MCF 10A (cell line): ENCODE measurements at regions of chr1 and their contacts with region 1.

Region 1: GRCh38 chr1:92909321-92909720 is 51.9 kb downstream of the DIPK1A start:
- DNase-seq: peak; percentile 94
- H3K4me3 Mint-ChIP-seq: no peak overlapping the region
- H3K27ac Mint-ChIP-seq: peak overlapping the region; percentile 56
- H3K4me1 Mint-ChIP-seq: peaks cover 26% of the 10 kb centered on the region
- H3K27me3 Mint-ChIP-seq: no peaks in the 10 kb centered on the region
- CTCF ChIP-seq: no peak

Region 2: GRCh38 chr1:92536980-92537884 is 372.1 kb before region 1 on chr1:
- CTCF ChIA-PET with region 1: no interaction called
- POLR2A ChIA-PET with region 1: no interaction called
- intact Hi-C with region 1: no loop called
- DNase-seq: peak; percentile 14
- H3K4me3 Mint-ChIP-seq: no peak overlapping the region
- H3K27ac Mint-ChIP-seq: no peak overlapping the region
- H3K4me1 Mint-ChIP-seq: no peaks in the 10 kb centered on the region
- H3K27me3 Mint-ChIP-seq: no peaks in the 10 kb centered on the region
- CTCF ChIP-seq: no peak

Region 3: DNA sequence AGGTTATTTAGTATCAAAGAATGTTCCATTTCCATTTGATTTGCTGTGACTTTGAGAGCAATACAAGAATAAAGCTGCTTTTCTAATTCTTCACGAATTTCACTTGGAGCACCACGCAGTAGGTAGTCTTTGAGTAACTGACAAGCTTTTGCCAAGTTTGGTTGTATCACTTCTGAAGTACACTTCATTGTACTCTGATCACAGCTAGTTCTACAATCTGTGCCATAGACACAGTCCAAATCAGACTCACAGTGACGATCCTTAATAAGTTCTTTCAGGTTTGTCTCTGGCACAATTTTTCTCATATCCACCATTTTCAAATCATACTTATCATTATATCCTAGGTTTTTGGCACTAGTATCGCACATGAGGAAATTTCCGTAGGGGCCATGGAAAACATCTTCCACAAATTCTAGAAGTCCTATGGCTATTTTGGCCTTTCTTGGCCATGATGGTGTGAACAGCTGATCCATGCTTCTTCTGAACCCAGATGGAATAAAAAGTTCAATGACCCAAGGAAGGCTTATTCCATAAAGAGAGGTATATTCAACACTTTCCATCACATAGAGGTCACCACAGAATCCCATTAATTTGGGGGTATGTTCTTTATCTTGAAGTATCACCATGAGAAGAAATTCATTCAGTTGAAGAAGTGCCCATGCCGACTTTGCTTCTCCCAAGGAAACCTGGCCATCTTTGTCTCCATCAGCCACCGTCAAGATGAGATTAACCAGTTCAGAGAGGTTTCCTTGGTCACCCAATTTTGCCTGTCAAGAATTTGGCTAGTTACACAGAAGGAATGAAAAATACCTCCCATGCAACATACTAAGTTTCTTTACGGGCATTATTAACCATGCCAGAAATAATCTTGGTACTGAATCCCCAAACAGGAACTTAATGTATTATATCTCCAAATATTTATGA is 65.6 kb before region 1 on chr1:
- CTCF ChIA-PET with region 1: no interaction called
- POLR2A ChIA-PET with region 1: interaction called, 5 read pairs
- intact Hi-C with region 1: loop called (anchors 10 kb)
- DNase-seq: no peak
- H3K4me3 Mint-ChIP-seq: no peak overlapping the region
- H3K27ac Mint-ChIP-seq: no peak overlapping the region
- H3K4me1 Mint-ChIP-seq: peaks cover 7% of the 10 kb centered on the region
- H3K27me3 Mint-ChIP-seq: no peaks in the 10 kb centered on the region
- CTCF ChIP-seq: no peak

Region 4: GRCh38 chr1:92960395-92961130 is 51.2 kb after region 1 on chr1:
- CTCF ChIA-PET with region 1: interaction called, 8 read pairs
- POLR2A ChIA-PET with region 1: interaction called, 31 read pairs
- intact Hi-C with region 1: loop called (anchors 1 kb)
- DNase-seq: peak; percentile 82
- H3K4me3 Mint-ChIP-seq: peak overlapping the region; percentile 85
- H3K27ac Mint-ChIP-seq: peak overlapping the region; percentile 78
- H3K4me1 Mint-ChIP-seq: peaks cover 4% of the 10 kb centered on the region
- H3K27me3 Mint-ChIP-seq: no peaks in the 10 kb centered on the region
- CTCF ChIP-seq: peak; percentile 35

Region 5: GRCh38 chr1:92987462-92987861 is 78.1 kb after region 1 on chr1:
- CTCF ChIA-PET with region 1: no interaction called
- POLR2A ChIA-PET with region 1: no interaction called
- intact Hi-C with region 1: no loop called
- DNase-seq: no peak
- H3K4me3 Mint-ChIP-seq: no peak overlapping the region
- H3K27ac Mint-ChIP-seq: no peak overlapping the region
- H3K4me1 Mint-ChIP-seq: peaks cover 5% of the 10 kb centered on the region
- H3K27me3 Mint-ChIP-seq: no peaks in the 10 kb centered on the region
- CTCF ChIP-seq: no peak